Gastrocnemius medialis (tissue), 4 donors: ENCODE measurements at regions of chr21 and their contacts with region 1.

Region 1: GRCh38 chr21:46347791-46348381 is 23.9 kb downstream of the PCNT start:
- DNase-seq: peak; percentile 96 to 100
- ATAC-seq: peak; percentile 92 to 93
- H3K4me3 ChIP-seq: peak overlapping the region; percentile 58 to 77 (median 72)
- H3K27ac ChIP-seq: peak overlapping the region; percentile 87 to 99 (median 96)
- H3K4me1 ChIP-seq: peaks cover 16 to 47% of the 10 kb centered on the region in 2 donors
- H3K27me3 ChIP-seq: no peaks in the 10 kb centered on the region
- CTCF ChIP-seq: peak; percentile 85 to 96 (median 93)
- POLR2A ChIP-seq: peak in 1 of 2 donors; percentile 97

Region 2: GRCh38 chr21:46295996-46296752 is 51.7 kb before region 1 on chr21:
- in situ Hi-C with region 1: no loop called
- intact Hi-C with region 1: no loop called
- DNase-seq: peak; percentile 76 to 80
- ATAC-seq: peak; percentile 77 to 92
- H3K4me3 ChIP-seq: peak overlapping the region in 3 of 4 donors; percentile 9 to 52 (median 13)
- H3K27ac ChIP-seq: peak overlapping the region; percentile 53 to 69 (median 58)
- H3K4me1 ChIP-seq: peaks cover 9 to 11% of the 10 kb centered on the region in 2 donors
- H3K27me3 ChIP-seq: peaks cover 7 to 27% (median 14%) of the 10 kb centered on the region in 3 donors
- CTCF ChIP-seq: no peak
- POLR2A ChIP-seq: no peak

Region 3: GRCh38 chr21:46392921-46393320 is 45.0 kb after region 1 on chr21:
- in situ Hi-C with region 1: loop called in 1 of 4 experiments (anchors 10 kb)
- intact Hi-C with region 1: loop called (anchors 2 kb)
- DNase-seq: peak in 1 of 2 donors; percentile 65
- ATAC-seq: peak in 1 of 2 donors; percentile 13
- H3K4me3 ChIP-seq: peak overlapping the region in 1 of 4 donors; percentile 13
- H3K27ac ChIP-seq: peak overlapping the region; percentile 94 to 98 (median 95)
- H3K4me1 ChIP-seq: peaks cover 36 to 44% of the 10 kb centered on the region in 2 donors
- H3K27me3 ChIP-seq: no peaks in the 10 kb centered on the region
- CTCF ChIP-seq: no peak
- POLR2A ChIP-seq: no peak

Region 4: GRCh38 chr21:46458315-46459023 is 110.6 kb after region 1 on chr21 and contains the start of gene DIP2A:
- in situ Hi-C with region 1: no loop called
- intact Hi-C with region 1: loop called (anchors 1 kb)
- DNase-seq: peak; percentile 94 to 96
- ATAC-seq: peak; percentile 78 to 85
- H3K4me3 ChIP-seq: peak within 1 kb of the TSS; percentile 70 to 96 (median 92)
- H3K27ac ChIP-seq: peak within 1 kb of the TSS; percentile 87 to 97 (median 96)
- H3K4me1 ChIP-seq: peaks cover 49 to 63% of the 10 kb centered on the region in 2 donors
- H3K27me3 ChIP-seq: no peaks in the 10 kb centered on the region
- CTCF ChIP-seq: peak in 1 of 5 experiments; percentile 20
- POLR2A ChIP-seq: peak; percentile 94 to 98
- total RNA-seq, gene DIP2A: 6.3 to 15.5 (median 11.8) TPM